ENCODE measurements at regions of chr1 and their contacts with region 1.

Region 1: DNA sequence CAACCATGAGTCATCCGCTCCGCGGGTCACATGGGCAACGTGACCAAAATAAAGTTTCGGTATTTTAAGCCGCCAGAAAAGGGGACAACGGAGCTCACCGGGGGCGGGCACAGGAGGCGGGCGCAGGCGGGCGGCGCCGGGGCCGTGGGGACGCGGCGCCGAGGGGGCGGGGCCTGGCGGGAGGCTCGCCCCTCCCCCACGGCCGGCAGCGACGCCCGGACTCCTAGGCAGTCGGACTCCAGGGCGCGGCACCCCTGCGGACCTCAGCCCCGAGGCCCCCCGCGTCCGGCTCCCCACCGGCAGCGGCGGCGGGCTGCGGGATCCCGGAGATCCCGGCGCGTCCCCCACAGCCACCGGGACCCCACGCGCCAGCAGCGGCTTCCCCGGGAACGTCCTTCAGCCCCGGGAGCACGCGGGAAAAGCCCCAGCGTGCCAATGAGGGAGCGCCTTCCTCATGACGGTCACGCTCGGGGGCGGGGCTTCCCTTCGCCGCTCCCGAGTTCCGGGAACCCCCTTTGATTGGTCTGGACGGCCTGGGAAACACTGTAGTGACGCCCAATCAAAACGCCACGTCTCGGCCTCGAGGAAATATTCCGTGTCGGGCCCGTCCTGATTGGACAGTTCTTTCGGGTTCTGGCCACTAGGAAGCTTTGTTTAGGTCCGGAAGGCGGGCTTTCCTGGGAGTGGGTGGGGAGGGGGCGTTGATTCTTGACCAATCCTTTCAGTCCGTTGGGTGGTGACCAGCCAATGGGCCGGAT is 515 bp upstream of the CAMTA1 start:
- DNase-seq: peak; percentile 100
- H3K4me3 ChIP-seq: peak overlapping the region; percentile 89
- H3K27ac ChIP-seq: peak overlapping the region; percentile 95
- H3K4me1 ChIP-seq: peaks cover 6% of the 10 kb centered on the region; the same call in 1 of the 2 replicates
- H3K27me3 ChIP-seq: no peaks in the 10 kb centered on the region

Region 2: GRCh38 chr1:6658359-6659060 is 126.2 kb before region 1 on chr1:
- in situ Hi-C with region 1: no loop called
- DNase-seq: no peak
- H3K4me3 ChIP-seq: no peak overlapping the region
- H3K27ac ChIP-seq: no peak overlapping the region
- H3K4me1 ChIP-seq: no peaks in the 10 kb centered on the region
- H3K27me3 ChIP-seq: no peaks in the 10 kb centered on the region

Region 3: DNA sequence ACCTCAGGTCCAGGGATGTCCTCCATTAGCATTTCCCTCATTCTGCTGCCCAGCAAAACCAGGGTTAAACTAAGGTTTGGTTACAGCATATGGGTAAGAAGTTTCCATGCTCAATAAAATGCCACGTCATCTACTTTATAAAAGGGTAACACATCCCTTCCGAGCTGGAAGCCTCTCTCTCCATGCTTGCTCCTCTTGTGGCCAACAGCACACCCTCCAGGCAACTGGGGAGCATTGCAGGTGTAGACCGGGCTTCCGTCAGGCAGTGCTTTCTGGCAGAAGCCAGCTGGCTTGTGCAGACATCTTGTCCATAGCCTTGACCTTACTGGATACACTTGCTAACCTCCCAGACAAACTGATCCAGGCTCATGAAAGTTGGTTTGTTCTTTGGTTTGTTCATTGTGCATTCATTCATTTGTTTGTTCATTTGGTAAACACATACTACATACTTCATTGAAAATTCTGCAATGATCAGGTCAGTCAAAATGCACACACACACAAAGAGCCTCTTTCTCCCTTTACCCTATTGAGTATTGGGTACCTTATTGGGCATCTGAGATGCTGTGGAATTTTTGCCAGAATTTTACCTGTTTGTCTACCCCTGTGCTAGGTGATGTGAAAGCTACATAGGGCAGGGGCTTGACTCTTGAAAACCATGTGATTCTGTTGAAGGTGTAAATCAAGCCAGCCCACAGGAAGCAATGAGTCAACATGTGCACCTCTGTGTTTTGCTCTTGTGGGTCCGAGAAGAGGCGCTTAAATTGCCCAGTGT is 423.3 kb after region 1 on chr1:
- in situ Hi-C with region 1: loop called (anchors 25 kb)
- DNase-seq: peak; percentile 73
- H3K4me3 ChIP-seq: no peak overlapping the region
- H3K27ac ChIP-seq: no peak overlapping the region
- H3K4me1 ChIP-seq: no peaks in the 10 kb centered on the region
- H3K27me3 ChIP-seq: no peaks in the 10 kb centered on the region

Measured in GM23248 (cell line).